WTC11 (cell line): ENCODE measurements at regions of chr5 and their contacts with region 1.

Region 1: GRCh38 chr5:86257871-86258270 is 359.9 kb upstream of the COX7C start:
- DNase-seq: no peak
- ATAC-seq: no peak
- H3K4me3 Mint-ChIP-seq: no peak overlapping the region
- H3K27ac Mint-ChIP-seq: no peak overlapping the region
- H3K4me1 Mint-ChIP-seq: no peaks in the 10 kb centered on the region
- H3K27me3 Mint-ChIP-seq: no peaks in the 10 kb centered on the region; the same call in 1 of the 2 replicates
- CTCF ChIP-seq: no peak

Region 2: GRCh38 chr5:86070719-86071118 is 187.2 kb before region 1 on chr5:
- CTCF ChIA-PET with region 1: no interaction called
- POLR2A ChIA-PET with region 1: no interaction called
- DNase-seq: no peak
- ATAC-seq: no peak
- H3K4me3 Mint-ChIP-seq: no peak overlapping the region
- H3K27ac Mint-ChIP-seq: no peak overlapping the region
- H3K4me1 Mint-ChIP-seq: no peaks in the 10 kb centered on the region
- H3K27me3 Mint-ChIP-seq: no peaks in the 10 kb centered on the region
- CTCF ChIP-seq: no peak

Region 3: DNA sequence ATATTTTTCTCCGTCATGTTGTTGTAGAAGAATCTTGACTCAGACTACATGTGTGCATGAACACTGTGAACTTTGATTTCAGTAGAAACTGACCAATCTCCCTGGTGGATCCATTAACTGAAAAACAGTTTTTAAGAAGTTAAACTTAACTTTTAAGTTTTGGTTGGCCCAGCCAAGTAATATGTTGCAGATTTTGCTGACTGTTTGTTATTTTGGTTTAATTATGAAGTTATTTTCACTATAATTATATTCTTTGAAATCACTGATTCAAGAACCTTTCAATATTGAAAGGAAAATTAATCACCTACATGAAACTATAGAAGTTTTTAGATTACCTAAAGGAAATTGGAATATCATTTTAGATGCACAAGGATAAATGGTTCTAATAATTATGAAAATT is 13.7 kb before region 1 on chr5:
- CTCF ChIA-PET with region 1: no interaction called
- POLR2A ChIA-PET with region 1: no interaction called
- DNase-seq: no peak
- ATAC-seq: no peak
- H3K4me3 Mint-ChIP-seq: no peak overlapping the region
- H3K27ac Mint-ChIP-seq: no peak overlapping the region
- H3K4me1 Mint-ChIP-seq: no peaks in the 10 kb centered on the region
- H3K27me3 Mint-ChIP-seq: no peaks in the 10 kb centered on the region
- CTCF ChIP-seq: no peak

Region 4: DNA sequence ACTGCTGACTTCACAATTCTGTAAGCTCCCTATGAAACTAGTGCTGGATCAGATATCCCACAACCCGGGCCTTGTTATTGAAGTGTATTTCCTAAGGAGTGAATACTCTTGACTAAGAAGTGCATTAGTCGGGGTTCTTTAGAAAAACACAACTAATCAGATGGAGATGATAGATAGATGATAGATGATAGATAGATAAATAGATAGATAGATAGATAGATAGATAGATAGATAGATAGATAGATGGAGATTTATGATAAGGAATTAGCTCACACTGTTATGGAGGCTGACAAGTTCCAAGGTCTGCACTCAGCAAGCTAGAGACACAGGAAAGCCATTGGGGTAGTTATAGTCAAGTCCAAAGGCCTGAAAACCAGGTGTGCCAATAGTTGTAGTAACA is 145.3 kb after region 1 on chr5:
- CTCF ChIA-PET with region 1: no interaction called
- POLR2A ChIA-PET with region 1: interaction called, 10 read pairs
- DNase-seq: no peak
- ATAC-seq: no peak
- H3K4me3 Mint-ChIP-seq: no peak overlapping the region
- H3K27ac Mint-ChIP-seq: no peak overlapping the region
- H3K4me1 Mint-ChIP-seq: no peaks in the 10 kb centered on the region
- H3K27me3 Mint-ChIP-seq: no peaks in the 10 kb centered on the region
- CTCF ChIP-seq: no peak